ENCODE measurements at regions of chr6 and their contacts with region 1.

Region 1: GRCh38 chr6:136210398-136211165 is 39.5 kb downstream of the MTFR2 start:
- DNase-seq: no peak
- ATAC-seq: no peak
- H3K4me3 ChIP-seq: no peak overlapping the region
- H3K27ac ChIP-seq: no peak overlapping the region
- H3K4me1 ChIP-seq: no peaks in the 10 kb centered on the region
- H3K27me3 ChIP-seq: no peaks in the 10 kb centered on the region
- CTCF ChIP-seq: no peak
- POLR2A ChIP-seq: no peak

Region 2: GRCh38 chr6:135909737-135910387 is 300.7 kb before region 1 on chr6:
- intact Hi-C with region 1: loop called (anchors 10 kb)
- DNase-seq: peak; percentile 51 to 78 (median 64)
- ATAC-seq: peak; percentile 62
- H3K4me3 ChIP-seq: no peak overlapping the region
- H3K27ac ChIP-seq: no peak overlapping the region
- H3K4me1 ChIP-seq: no peaks in the 10 kb centered on the region
- H3K27me3 ChIP-seq: no peaks in the 10 kb centered on the region
- CTCF ChIP-seq: peak; percentile 14 to 68 (median 55)
- POLR2A ChIP-seq: no peak

Region 3: GRCh38 chr6:136137008-136137692 is 73.4 kb before region 1 on chr6:
- intact Hi-C with region 1: no loop called
- DNase-seq: no peak
- ATAC-seq: peak; percentile 90
- H3K4me3 ChIP-seq: no peak overlapping the region
- H3K27ac ChIP-seq: peak overlapping the region in 3 of 4 donors; percentile 16 to 40 (median 28)
- H3K4me1 ChIP-seq: peaks cover 10% of the 10 kb centered on the region
- H3K27me3 ChIP-seq: no peaks in the 10 kb centered on the region
- CTCF ChIP-seq: no peak
- POLR2A ChIP-seq: no peak